HepG2 (cell line): ENCODE measurements at regions of chr12 and their contacts with region 1.

Region 1: GRCh38 chr12:54279866-54280467 is at the start of gene CBX5:
- DNase-seq: peak; percentile 98
- ATAC-seq: peak; percentile 39
- H3K4me3 ChIP-seq: peak within 1 kb of the TSS; percentile 73 to 79 (median 76)
- H3K27ac ChIP-seq: peak within 1 kb of the TSS; percentile 96
- H3K4me1 ChIP-seq: peaks cover 64% of the 10 kb centered on the region
- H3K27me3 ChIP-seq: no peaks in the 10 kb centered on the region; a peak in 1 of 5 replicates
- CTCF ChIP-seq: no peak
- EP300 ChIP-seq: no peak
- POLR2A ChIP-seq: peak in 1 of 2 experiments; percentile 46; a peak in 2 of 4 replicates
- RAD21 ChIP-seq: 0 out of 2 replicates have a peak, but pooled peaks have one; percentile 19
- total RNA-seq, gene CBX5: 22.2 and 45.4 TPM in 2 replicates

Region 2: DNA sequence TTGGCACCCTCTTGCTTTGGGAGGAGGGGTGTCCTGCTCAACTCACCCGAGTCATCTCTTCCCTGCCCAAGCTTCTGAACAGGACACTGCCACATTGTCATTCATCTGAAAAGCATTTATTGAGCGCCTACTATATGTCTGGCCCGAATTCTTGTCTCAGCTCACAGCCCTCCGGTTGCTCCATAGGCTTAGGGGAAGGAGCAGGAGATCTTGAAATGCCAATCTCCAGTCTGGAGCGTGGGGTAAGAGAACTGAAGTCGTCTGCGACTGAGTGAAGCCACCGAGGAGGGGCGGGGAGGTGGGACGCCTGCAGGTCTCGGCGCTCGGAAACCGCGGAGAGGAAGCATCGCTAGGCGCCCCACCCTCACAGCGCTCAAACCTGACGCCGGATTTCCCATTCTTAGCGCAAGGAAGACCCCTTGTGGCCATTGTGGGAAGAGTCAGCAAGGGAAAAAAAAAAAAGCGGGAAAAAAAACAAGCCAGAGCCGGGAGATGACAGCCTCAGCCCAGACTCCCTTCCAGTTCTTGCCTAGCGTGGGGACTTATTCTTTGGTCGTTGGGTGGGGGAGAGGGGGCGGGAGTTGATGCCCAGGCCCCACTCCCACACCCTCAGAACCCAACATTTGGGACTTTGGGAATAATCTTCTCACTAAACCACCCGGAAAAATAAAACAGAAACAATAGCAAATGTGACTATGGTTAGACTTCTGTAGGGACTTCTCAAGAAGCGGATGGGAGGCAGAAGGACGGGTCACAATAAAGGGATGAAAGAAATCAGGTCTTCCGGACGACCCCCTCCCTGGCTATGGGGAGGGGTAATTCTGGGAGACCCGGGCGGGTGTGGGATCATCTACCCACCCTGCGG is 62.9 kb before region 1 on chr12:
- CTCF ChIA-PET with region 1: no interaction called
- POLR2A ChIA-PET with region 1: no interaction called
- in situ Hi-C with region 1: no loop called
- intact Hi-C with region 1: no loop called
- DNase-seq: peak; percentile 79
- ATAC-seq: peak; percentile 54
- H3K4me3 ChIP-seq: peak overlapping the region in 1 of 3 experiments; percentile 40; a peak in 2 of 6 replicates
- H3K27ac ChIP-seq: no peak overlapping the region
- H3K4me1 ChIP-seq: peaks cover 35% of the 10 kb centered on the region
- H3K27me3 ChIP-seq: peaks cover 1 to 28% of the 10 kb centered on the region in 2 experiments; a peak in 4 of 5 replicates
- CTCF ChIP-seq: peak; percentile 82
- EP300 ChIP-seq: no peak
- POLR2A ChIP-seq: no peak
- RAD21 ChIP-seq: no peak

Region 3: GRCh38 chr12:54259194-54260011 is 20.6 kb before region 1 on chr12:
- CTCF ChIA-PET with region 1: no interaction called
- POLR2A ChIA-PET with region 1: interaction called, 16 read pairs
- in situ Hi-C with region 1: no loop called
- intact Hi-C with region 1: no loop called
- DNase-seq: no peak
- ATAC-seq: no peak
- H3K4me3 ChIP-seq: no peak overlapping the region
- H3K27ac ChIP-seq: no peak overlapping the region
- H3K4me1 ChIP-seq: peaks cover 11% of the 10 kb centered on the region
- H3K27me3 ChIP-seq: no peaks in the 10 kb centered on the region
- CTCF ChIP-seq: no peak
- EP300 ChIP-seq: no peak
- POLR2A ChIP-seq: no peak
- RAD21 ChIP-seq: no peak

Region 4: DNA sequence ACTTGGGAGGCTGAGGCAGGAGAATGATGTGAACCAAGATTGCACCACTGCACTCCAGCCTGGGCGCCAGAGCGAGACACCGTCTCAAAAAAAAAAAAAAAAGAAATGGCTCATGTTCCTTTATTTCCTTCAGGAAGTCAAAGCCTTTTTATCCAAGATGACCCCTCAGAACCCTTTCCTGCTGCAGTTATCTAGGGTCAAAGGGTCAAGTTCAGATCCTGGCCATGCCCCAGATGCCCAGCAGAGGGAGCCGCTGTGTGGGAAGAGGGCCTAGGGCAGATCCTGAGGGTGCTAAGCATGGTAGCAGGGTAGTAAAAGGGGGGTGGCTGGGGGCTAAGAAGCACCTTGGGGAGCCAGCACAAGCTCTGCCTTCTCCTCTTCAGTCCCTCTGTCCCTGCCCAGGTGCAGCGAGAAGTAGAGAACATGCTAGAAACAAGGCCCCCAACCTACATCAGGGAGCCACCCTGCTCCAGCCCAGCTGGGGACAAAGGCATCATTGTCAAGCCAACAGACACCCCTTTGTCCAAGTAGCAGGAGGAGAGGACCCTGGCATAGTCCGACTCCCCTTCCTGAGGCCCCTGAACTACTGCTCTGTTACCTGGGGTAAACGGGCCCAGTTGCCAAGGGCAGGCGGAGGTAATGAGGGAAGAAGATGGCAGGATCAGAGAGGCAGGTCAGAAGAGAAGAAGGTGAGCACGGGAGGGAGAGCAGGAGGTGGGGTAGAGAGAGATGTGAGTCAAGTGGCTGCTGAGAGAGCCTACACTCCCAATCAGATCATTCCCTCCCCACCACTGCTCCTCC is 14.4 kb after region 1 on chr12:
- CTCF ChIA-PET with region 1: no interaction called
- POLR2A ChIA-PET with region 1: interaction called, 176 read pairs
- in situ Hi-C with region 1: no loop called
- intact Hi-C with region 1: no loop called
- DNase-seq: peak; percentile 89
- ATAC-seq: peak; percentile 60
- H3K4me3 ChIP-seq: peak overlapping the region in 2 of 3 experiments; percentile 26 to 64; a peak in 3 of 6 replicates
- H3K27ac ChIP-seq: peak overlapping the region; percentile 89
- H3K4me1 ChIP-seq: peaks cover 57% of the 10 kb centered on the region
- H3K27me3 ChIP-seq: no peaks in the 10 kb centered on the region
- CTCF ChIP-seq: peak; percentile 93
- EP300 ChIP-seq: peak; percentile 45 to 70; a peak in 3 of 4 replicates
- POLR2A ChIP-seq: peak; percentile 22 to 36; a peak in 2 of 4 replicates
- RAD21 ChIP-seq: peak; percentile 84

Region 5: GRCh38 chr12:54337280-54337842 is 57.4 kb after region 1 on chr12:
- CTCF ChIA-PET with region 1: no interaction called
- POLR2A ChIA-PET with region 1: interaction called, 16 read pairs
- in situ Hi-C with region 1: no loop called
- intact Hi-C with region 1: no loop called
- DNase-seq: peak; percentile 55
- ATAC-seq: peak; percentile 66
- H3K4me3 ChIP-seq: no peak overlapping the region
- H3K27ac ChIP-seq: peak overlapping the region; percentile 12
- H3K4me1 ChIP-seq: peaks cover 70% of the 10 kb centered on the region
- H3K27me3 ChIP-seq: no peaks in the 10 kb centered on the region
- CTCF ChIP-seq: no peak
- EP300 ChIP-seq: no peak; a peak in 1 of 4 replicates
- POLR2A ChIP-seq: no peak
- RAD21 ChIP-seq: no peak

Region 6: DNA sequence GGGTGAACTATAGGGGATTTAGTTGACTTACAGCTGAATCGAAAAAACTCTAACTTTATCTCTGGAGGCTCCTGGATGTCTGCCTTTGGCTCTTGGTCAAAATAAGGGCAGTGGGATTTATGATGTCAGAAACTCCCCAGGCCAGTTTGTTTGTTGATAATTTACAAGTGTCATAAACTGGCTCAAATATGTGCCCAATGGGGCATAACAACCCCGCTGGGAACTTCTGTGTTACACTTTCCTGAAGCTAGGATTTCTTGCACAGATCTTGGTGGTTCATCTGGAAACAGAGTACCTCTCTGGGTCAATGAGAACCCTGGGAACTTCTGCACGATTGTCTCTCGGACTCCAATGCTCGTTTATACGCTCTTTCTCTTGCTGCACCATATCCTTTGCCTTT is 515.7 kb after region 1 on chr12:
- CTCF ChIA-PET with region 1: no interaction called
- POLR2A ChIA-PET with region 1: no interaction called
- in situ Hi-C with region 1: no loop called
- intact Hi-C with region 1: no loop called
- DNase-seq: no peak
- ATAC-seq: no peak
- H3K4me3 ChIP-seq: no peak overlapping the region
- H3K27ac ChIP-seq: no peak overlapping the region
- H3K4me1 ChIP-seq: no peaks in the 10 kb centered on the region
- H3K27me3 ChIP-seq: no peaks in the 10 kb centered on the region
- CTCF ChIP-seq: no peak
- EP300 ChIP-seq: no peak
- POLR2A ChIP-seq: no peak
- RAD21 ChIP-seq: no peak